HEK293 (cell line): ENCODE measurements at regions of chr9 and their contacts with region 1.

Region 1: DNA sequence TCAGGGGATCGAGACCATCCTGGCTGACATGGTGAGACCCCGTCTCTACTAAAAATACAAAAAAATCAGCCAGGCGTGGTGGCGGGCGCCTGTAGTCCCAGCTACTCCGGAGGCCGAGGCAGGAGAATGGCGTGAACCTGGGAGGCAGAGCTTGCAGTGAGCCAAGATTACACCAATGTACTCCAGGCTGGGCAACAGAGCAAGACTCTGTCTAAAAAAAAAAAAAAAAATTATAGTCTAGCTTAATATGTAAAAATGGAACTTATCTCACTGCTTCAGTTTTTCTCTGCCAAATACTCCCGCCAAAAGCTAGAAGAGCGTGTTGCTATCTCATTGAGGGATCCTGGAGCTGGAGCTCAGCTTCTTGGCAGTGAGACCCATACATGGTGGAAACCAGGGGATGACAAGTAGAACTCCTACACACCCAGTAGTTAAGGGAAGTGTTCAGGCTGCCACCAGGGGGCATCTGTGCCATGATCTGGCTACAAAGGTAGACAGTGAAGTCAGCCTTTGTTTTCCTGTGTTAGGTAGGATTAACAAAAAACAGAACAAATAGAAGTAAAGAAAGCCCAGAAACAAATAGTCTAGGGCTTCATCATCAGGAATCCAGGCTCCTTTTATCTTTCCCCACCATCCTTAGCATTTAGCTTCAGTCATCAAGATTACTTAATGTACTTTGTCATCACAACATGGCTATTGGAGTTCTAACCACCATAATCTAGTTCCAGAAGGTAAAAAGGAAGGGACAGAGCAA is 33.6 kb upstream of the GLIPR2 start:
- H3K4me3 ChIP-seq: no peak overlapping the region
- H3K27ac ChIP-seq: no peak overlapping the region
- H3K4me1 ChIP-seq: no peaks in the 10 kb centered on the region
- CTCF ChIP-seq: no peak

Region 2: DNA sequence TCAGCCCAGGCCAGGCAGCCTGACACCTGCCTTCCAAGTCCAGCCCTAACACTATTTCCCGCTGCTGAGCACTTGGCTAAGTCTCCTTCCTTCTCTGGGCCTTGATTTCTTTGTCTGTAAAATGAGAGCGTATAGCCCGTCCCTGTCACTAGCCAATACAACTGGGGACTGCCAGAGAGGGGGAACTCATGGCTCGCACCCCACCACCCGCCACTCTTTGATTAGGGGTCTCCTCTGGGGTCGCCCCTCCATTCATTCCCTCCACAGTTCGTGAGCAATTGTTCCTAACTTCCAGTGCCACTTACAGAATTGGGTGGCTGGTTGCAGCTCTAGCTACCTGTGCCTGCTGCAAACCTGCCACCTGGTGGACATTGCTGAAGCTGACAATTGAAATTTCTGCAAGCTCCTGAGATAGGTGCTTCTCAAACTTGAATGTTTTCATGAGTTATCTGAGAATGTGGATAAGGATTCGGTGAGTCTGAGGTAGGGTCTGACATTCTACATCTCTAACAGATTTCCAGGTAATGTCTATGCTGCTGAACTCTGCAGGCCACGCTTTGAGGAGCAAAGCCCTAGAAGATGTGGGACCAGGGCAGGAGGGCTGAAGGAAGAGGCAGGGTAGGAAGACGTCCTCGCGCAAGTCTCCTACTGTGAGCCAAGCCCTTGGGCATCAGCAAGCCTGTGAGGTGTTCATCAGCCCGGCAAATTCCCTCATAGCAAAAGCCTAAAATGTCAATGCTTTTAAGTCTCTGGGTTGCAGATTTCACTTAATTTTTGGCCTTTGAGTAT is 79.5 kb before region 1 on chr9:
- CTCF ChIA-PET with region 1: interaction called, 11 read pairs
- POLR2A ChIA-PET with region 1: no interaction called
- H3K4me3 ChIP-seq: no peak overlapping the region
- H3K27ac ChIP-seq: no peak overlapping the region
- H3K4me1 ChIP-seq: no peaks in the 10 kb centered on the region
- CTCF ChIP-seq: peak; percentile 63; the same call in 1 of the 2 replicates

Region 3: DNA sequence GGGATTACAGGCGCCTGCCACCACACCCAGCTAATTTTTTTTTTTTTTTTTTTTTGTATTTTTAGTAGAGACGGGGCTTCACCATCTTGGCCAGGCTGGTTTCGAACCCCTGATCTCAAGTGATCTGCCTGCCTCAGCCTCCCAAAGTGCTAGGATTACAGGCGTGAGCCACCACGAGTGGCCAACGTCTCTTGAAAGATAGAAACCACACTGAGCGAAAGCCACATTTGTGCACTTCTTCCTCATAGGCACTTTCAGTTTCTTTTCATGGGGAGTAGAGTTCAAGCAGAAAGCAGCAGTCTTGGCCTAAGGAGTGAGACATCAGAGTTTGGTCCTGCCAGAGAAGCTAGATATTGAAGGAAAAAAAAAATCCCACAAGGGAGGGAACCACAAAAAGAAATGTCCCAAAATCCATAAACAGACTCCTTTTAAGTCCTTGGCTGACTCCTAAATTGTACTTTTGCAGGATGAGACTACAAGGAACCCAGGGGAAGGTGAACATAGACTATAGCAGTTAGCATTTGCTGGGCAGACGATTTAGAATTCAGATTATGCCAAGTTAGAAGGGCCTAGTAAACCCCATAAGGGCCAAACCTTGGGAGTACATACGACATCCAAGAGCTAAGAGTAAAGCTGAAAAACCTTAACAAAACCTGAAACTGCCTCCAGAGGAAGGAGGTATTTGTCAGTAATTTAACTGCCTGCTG is 10.3 kb before region 1 on chr9:
- CTCF ChIA-PET with region 1: interaction called, 37 read pairs
- POLR2A ChIA-PET with region 1: interaction called, 6 read pairs
- H3K4me3 ChIP-seq: no peak overlapping the region
- H3K27ac ChIP-seq: no peak overlapping the region
- H3K4me1 ChIP-seq: peaks cover 6% of the 10 kb centered on the region; the same call in 1 of the 2 replicates
- CTCF ChIP-seq: no peak

Region 4: GRCh38 chr9:36125062-36125855 is 22.3 kb after region 1 on chr9:
- CTCF ChIA-PET with region 1: interaction called, 14 read pairs
- POLR2A ChIA-PET with region 1: no interaction called
- H3K4me3 ChIP-seq: no peak overlapping the region
- H3K27ac ChIP-seq: no peak overlapping the region
- H3K4me1 ChIP-seq: no peaks in the 10 kb centered on the region
- CTCF ChIP-seq: no peak

Region 5: GRCh38 chr9:36166101-36166927 is 63.4 kb after region 1 on chr9:
- CTCF ChIA-PET with region 1: interaction called, 172 read pairs
- POLR2A ChIA-PET with region 1: interaction called, 7 read pairs
- H3K4me3 ChIP-seq: peak overlapping the region; percentile 21; the same call in 1 of the 2 replicates
- H3K27ac ChIP-seq: no peak overlapping the region
- H3K4me1 ChIP-seq: peaks cover 4% of the 10 kb centered on the region; the same call in 1 of the 2 replicates
- CTCF ChIP-seq: peak; percentile 83

Region 6: GRCh38 chr9:36276781-36277181 is 173.9 kb after region 1 on chr9:
- CTCF ChIA-PET with region 1: no interaction called
- POLR2A ChIA-PET with region 1: no interaction called
- H3K4me3 ChIP-seq: no peak overlapping the region
- H3K27ac ChIP-seq: no peak overlapping the region
- H3K4me1 ChIP-seq: no peaks in the 10 kb centered on the region; the same call in 1 of the 2 replicates
- CTCF ChIP-seq: no peak